H1 (cell line): ENCODE measurements at regions of chr10 and their contacts with region 1.

Region 1: GRCh38 chr10:13348216-13349017 is at the start of gene SEPHS1:
- DNase-seq: peak; percentile 54 to 79
- H3K4me3 ChIP-seq: peak within 1 kb of the TSS; percentile 65 to 87 (median 78)
- H3K27ac ChIP-seq: peak within 1 kb of the TSS; percentile 96
- H3K4me1 ChIP-seq: peaks cover 17 to 45% (median 29%) of the 10 kb centered on the region in 4 experiments
- H3K27me3 ChIP-seq: no peaks in the 10 kb centered on the region
- CTCF ChIP-seq: no peak
- EP300 ChIP-seq: no peak
- POLR2A ChIP-seq: peak; percentile 41 to 65
- RAD21 ChIP-seq: no peak
- total RNA-seq, gene SEPHS1: 633 and 683 TPM in 2 replicates

Region 2: GRCh38 chr10:13271552-13272163 is 76.8 kb before region 1 on chr10:
- CTCF ChIA-PET with region 1: interaction called, 12 read pairs
- POLR2A ChIA-PET with region 1: interaction called, 12 read pairs
- DNase-seq: peak; percentile 38 to 91
- H3K4me3 ChIP-seq: no peak overlapping the region; a peak in 1 of 8 replicates
- H3K27ac ChIP-seq: peak overlapping the region; percentile 36; the same call in 1 of the 2 replicates
- H3K4me1 ChIP-seq: peaks cover 4 to 12% (median 7%) of the 10 kb centered on the region in 4 experiments
- H3K27me3 ChIP-seq: no peaks in the 10 kb centered on the region; a peak in 1 of 7 replicates
- CTCF ChIP-seq: peak; percentile 72 to 88 (median 84)
- EP300 ChIP-seq: no peak
- POLR2A ChIP-seq: no peak
- RAD21 ChIP-seq: peak; percentile 60 to 77

Region 3: DNA sequence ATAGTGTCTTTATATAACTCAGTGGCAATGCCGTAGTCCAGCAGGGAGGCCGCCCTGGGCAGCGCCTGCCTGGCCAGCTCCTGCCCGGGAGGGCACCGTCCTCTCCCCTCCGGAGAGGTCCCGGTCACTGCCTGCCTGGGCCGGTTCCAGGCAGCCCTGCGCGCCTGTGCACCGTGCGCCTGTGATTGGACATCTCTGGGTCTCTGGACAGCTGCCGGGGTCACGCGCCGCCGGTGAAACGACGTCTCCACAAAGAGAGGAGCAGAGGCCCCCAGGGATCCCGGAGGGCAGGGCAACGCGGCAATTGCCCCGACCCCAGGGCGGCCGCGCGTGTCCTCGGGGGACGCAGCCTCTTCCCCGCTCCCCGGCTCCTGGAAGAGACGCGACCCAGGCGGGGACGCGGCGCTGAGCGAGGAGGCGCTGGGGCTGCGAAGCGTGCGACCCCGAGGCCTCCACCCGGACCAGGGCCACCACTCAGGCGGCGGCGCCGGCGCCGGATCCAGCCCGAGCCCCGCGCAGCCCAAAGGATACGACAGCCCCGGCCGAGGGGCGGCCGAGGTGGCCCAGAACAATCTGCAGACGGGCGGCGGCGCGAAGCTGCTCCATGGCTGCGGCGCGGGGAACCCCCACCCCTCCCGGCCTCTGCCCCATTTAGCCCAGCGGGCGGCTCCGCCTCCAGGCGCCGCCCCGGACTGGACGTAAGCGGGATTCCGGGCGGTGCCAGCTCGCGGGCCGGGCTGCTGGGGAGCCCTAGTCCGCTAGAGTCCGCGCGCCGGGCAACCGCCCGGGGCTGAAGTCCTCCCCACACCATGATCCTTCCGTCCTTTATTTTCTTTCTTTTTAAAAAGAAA is 48.8 kb before region 1 on chr10 and contains the start of gene PHYH:
- CTCF ChIA-PET with region 1: interaction called, 13 read pairs
- POLR2A ChIA-PET with region 1: interaction called, 92 read pairs
- DNase-seq: peak; percentile 50 to 87
- H3K4me3 ChIP-seq: peak within 1 kb of the TSS; percentile 39 to 58 (median 54)
- H3K27ac ChIP-seq: peak within 1 kb of the TSS; percentile 71; the same call in 1 of the 2 replicates
- H3K4me1 ChIP-seq: peaks cover 0 to 6% (median 3%) of the 10 kb centered on the region in 4 experiments; a peak in 5 of 7 replicates
- H3K27me3 ChIP-seq: no peaks in the 10 kb centered on the region; a peak in 2 of 7 replicates
- CTCF ChIP-seq: no peak
- EP300 ChIP-seq: peak in 1 of 2 experiments; percentile 54; a peak in 1 of 3 replicates
- POLR2A ChIP-seq: peak; percentile 76 to 80
- RAD21 ChIP-seq: peak in 1 of 2 experiments; percentile 1; a peak in 1 of 4 replicates
- total RNA-seq, gene PHYH: 22.7 and 23.2 TPM in 2 replicates

Region 4: GRCh38 chr10:13327534-13327933 is 20.9 kb before region 1 on chr10:
- CTCF ChIA-PET with region 1: interaction called, 24 read pairs
- POLR2A ChIA-PET with region 1: interaction called, 85 read pairs
- DNase-seq: no peak
- H3K4me3 ChIP-seq: no peak overlapping the region
- H3K27ac ChIP-seq: no peak overlapping the region
- H3K4me1 ChIP-seq: peaks cover 4 to 8% (median 5%) of the 10 kb centered on the region in 4 experiments; a peak in 6 of 7 replicates
- H3K27me3 ChIP-seq: no peaks in the 10 kb centered on the region
- CTCF ChIP-seq: no peak
- EP300 ChIP-seq: no peak
- POLR2A ChIP-seq: no peak
- RAD21 ChIP-seq: no peak

Region 5: DNA sequence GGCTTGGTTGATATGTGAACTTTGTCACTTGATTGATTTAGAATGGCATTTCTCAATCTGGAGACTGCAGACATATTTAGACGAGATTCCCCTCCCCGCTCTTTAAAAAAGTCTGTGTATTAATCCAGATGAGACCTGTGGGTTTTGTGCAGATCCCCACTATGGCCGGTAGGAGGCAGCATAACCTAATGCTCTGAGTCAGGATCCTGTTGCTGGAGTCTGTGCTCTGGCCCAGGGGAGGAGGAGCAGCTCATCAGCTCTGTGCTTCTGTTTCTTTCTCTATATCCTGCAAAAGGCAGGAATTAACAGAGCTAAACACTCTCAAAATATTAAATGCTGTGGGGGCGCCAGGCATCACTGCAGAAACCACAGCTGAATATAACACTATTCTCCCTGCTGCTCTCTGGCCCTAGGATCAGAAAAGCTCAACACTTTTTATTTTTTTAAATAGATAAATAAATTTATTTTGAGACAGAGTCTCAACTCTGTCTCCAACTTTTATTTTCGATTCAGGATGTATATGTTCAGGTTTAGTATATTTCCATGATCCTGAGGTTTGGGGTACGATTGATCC is 23.6 kb after region 1 on chr10:
- CTCF ChIA-PET with region 1: interaction called, 6 read pairs
- POLR2A ChIA-PET with region 1: interaction called, 77 read pairs
- DNase-seq: peak; percentile 57 to 72
- H3K4me3 ChIP-seq: no peak overlapping the region
- H3K27ac ChIP-seq: no peak overlapping the region
- H3K4me1 ChIP-seq: no peaks in the 10 kb centered on the region
- H3K27me3 ChIP-seq: no peaks in the 10 kb centered on the region
- CTCF ChIP-seq: peak; percentile 68 to 96 (median 91)
- EP300 ChIP-seq: no peak
- POLR2A ChIP-seq: no peak
- RAD21 ChIP-seq: peak; percentile 99 to 100

Region 6: GRCh38 chr10:13399236-13399635 is 50.8 kb after region 1 on chr10:
- CTCF ChIA-PET with region 1: interaction called, 4 read pairs
- POLR2A ChIA-PET with region 1: interaction called, 15 read pairs
- DNase-seq: no peak
- H3K4me3 ChIP-seq: no peak overlapping the region
- H3K27ac ChIP-seq: no peak overlapping the region
- H3K4me1 ChIP-seq: peaks cover 1 to 9% (median 5%) of the 10 kb centered on the region in 4 experiments; a peak in 6 of 7 replicates
- H3K27me3 ChIP-seq: no peaks in the 10 kb centered on the region
- CTCF ChIP-seq: peak in 1 of 3 experiments; percentile 10; a peak in 1 of 4 replicates
- EP300 ChIP-seq: no peak
- POLR2A ChIP-seq: no peak
- RAD21 ChIP-seq: no peak; a peak in 1 of 4 replicates

Region 7: DNA sequence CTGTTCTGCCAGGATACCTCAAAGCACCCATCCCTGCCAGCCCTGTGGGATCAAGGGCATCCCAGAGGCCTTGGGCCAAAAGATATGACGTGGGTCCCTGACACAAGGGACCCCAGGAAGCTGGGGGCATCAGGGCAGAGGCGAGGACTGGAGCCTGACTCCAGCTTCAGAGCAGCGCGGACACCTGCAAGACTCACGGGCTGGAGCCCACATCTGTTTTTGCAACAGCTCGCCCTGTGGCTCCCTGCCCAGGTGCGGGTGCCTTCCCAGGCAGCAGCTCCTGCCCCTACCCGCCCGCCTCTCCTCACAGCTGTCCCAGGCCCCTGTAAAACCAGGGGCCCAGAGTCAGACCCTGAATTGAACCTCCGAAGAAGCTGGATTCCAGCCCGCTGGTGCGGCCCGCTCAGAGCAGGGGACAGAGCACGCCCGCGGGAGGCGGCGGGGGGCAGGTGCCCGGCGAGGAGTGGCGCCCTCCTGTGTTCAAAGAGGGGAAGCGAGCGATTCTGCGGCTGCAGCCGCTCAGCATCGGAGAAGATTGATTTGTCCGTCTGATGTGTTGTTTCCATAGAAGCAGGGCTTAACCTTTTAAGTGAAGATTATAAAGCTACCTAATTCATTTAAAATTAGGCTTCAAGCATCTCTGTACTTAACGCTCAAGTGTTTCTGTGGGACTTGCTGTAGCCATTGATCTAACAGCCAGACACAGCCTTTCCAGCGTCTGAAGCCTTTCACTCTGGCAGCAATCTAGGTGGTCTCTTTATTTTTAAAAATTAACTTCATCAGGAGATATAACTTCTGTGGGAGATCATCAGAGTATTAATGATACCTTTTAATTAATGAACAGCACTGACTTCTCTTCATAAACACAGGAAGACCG is 92.0 kb after region 1 on chr10:
- CTCF ChIA-PET with region 1: interaction called, 4 read pairs
- POLR2A ChIA-PET with region 1: interaction called, 11 read pairs
- DNase-seq: peak in 1 of 2 experiments; percentile 91
- H3K4me3 ChIP-seq: peak overlapping the region; percentile 33 to 61 (median 54); a peak in 7 of 8 replicates
- H3K27ac ChIP-seq: no peak overlapping the region
- H3K4me1 ChIP-seq: peaks cover 4 to 7% (median 5%) of the 10 kb centered on the region in 4 experiments; a peak in 6 of 7 replicates
- H3K27me3 ChIP-seq: peaks cover 7 to 23% (median 19%) of the 10 kb centered on the region in 4 experiments
- CTCF ChIP-seq: peak; percentile 85 to 90 (median 89)
- EP300 ChIP-seq: no peak
- POLR2A ChIP-seq: no peak
- RAD21 ChIP-seq: peak; percentile 69 to 81